CD4-positive, alpha-beta memory T cell (primary cell): ENCODE measurements at regions of chr4 and their contacts with region 1.

Region 1: GRCh38 chr4:37603070-37603468 is 83.1 kb downstream of the RELL1 start:
- DNase-seq: peak; percentile 54 to 69 (median 58)
- H3K4me3 ChIP-seq: no peak overlapping the region
- H3K4me3 Mint-ChIP-seq: peak overlapping the region in 1 of 8 donors; percentile 23
- H3K27ac ChIP-seq: no peak overlapping the region
- H3K27ac Mint-ChIP-seq: peak overlapping the region in 3 of 7 donors; percentile 63 to 77 (median 73)
- H3K4me1 ChIP-seq: peaks cover 4% of the 10 kb centered on the region
- H3K4me1 Mint-ChIP-seq: peaks cover 4 to 11% (median 6%) of the 10 kb centered on the region in 4 donors
- H3K27me3 ChIP-seq: no peaks in the 10 kb centered on the region
- H3K27me3 Mint-ChIP-seq: no peaks in the 10 kb centered on the region

Region 2: GRCh38 chr4:37590016-37590415 is 13.1 kb before region 1 on chr4:
- CTCF ChIA-PET with region 1: interaction called, 12 read pairs
- POLR2A ChIA-PET with region 1: interaction called, 3 read pairs
- intact Hi-C with region 1: no loop called
- DNase-seq: no peak
- H3K4me3 ChIP-seq: no peak overlapping the region
- H3K4me3 Mint-ChIP-seq: no peak overlapping the region
- H3K27ac ChIP-seq: no peak overlapping the region
- H3K27ac Mint-ChIP-seq: no peak overlapping the region
- H3K4me1 ChIP-seq: no peaks in the 10 kb centered on the region
- H3K4me1 Mint-ChIP-seq: no peaks in the 10 kb centered on the region
- H3K27me3 ChIP-seq: no peaks in the 10 kb centered on the region
- H3K27me3 Mint-ChIP-seq: peaks cover 0 to 2% of the 10 kb centered on the region in 2 donors

Region 3: DNA sequence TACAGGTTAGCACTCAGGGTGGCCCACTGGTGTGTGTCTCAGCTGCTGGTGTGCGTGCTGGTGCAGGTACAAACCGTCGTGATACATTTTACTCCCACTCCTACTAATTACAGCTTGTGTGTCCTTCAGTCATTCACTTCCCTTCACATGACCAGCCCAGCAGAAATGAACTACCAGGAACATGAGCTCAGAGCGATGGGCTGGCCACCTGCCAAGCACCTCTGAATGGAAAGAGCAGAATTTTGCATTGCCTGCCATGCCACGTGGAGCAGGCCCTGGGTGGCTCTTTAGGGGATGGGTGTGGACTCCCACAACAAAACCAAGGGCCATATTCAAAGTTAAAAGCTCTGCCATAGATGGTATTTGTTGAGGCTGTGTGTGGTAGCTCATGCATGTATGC is 164.5 kb after region 1 on chr4:
- CTCF ChIA-PET with region 1: interaction called, 11 read pairs
- POLR2A ChIA-PET with region 1: no interaction called
- intact Hi-C with region 1: no loop called
- DNase-seq: no peak
- H3K4me3 ChIP-seq: no peak overlapping the region
- H3K4me3 Mint-ChIP-seq: no peak overlapping the region
- H3K27ac ChIP-seq: no peak overlapping the region
- H3K27ac Mint-ChIP-seq: no peak overlapping the region
- H3K4me1 ChIP-seq: no peaks in the 10 kb centered on the region
- H3K4me1 Mint-ChIP-seq: peaks cover 0 to 3% (median 0%) of the 10 kb centered on the region in 4 donors
- H3K27me3 ChIP-seq: no peaks in the 10 kb centered on the region
- H3K27me3 Mint-ChIP-seq: no peaks in the 10 kb centered on the region

Region 4: DNA sequence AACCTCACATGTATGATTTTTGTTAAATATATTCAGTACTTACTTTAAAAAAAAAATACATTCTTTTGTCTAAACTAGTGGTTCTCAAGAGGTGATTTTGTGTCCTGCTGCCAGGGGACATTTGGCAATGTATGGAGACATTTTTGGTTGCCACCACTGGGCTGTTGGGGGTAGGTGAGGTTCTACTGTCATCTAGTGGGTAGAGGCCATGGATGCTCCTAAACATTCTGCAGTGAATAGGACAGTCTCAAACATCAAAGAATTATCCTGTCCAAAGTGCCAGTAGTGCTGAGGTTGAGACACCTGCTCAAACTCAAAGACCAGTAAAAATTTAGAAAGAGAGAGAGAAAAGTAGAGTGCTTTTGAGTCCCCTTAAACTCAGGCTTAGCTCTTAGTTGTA is 190.5 kb after region 1 on chr4:
- CTCF ChIA-PET with region 1: interaction called, 43 read pairs
- POLR2A ChIA-PET with region 1: no interaction called
- intact Hi-C with region 1: no loop called
- DNase-seq: peak in 4 of 5 donors; percentile 14 to 27 (median 16)
- H3K4me3 ChIP-seq: no peak overlapping the region
- H3K4me3 Mint-ChIP-seq: no peak overlapping the region
- H3K27ac ChIP-seq: no peak overlapping the region
- H3K27ac Mint-ChIP-seq: no peak overlapping the region
- H3K4me1 ChIP-seq: no peaks in the 10 kb centered on the region
- H3K4me1 Mint-ChIP-seq: no peaks in the 10 kb centered on the region
- H3K27me3 ChIP-seq: no peaks in the 10 kb centered on the region
- H3K27me3 Mint-ChIP-seq: peaks cover under 1 to 12% of the 10 kb centered on the region in 2 donors

Region 5: GRCh38 chr4:37977471-37978247 is 374.6 kb after region 1 on chr4:
- CTCF ChIA-PET with region 1: no interaction called
- POLR2A ChIA-PET with region 1: no interaction called
- intact Hi-C with region 1: loop called (anchors 2 kb)
- DNase-seq: peak; percentile 74 to 78 (median 77)
- H3K4me3 ChIP-seq: peak overlapping the region; percentile 67 to 69
- H3K4me3 Mint-ChIP-seq: peak overlapping the region; percentile 86 to 92 (median 88)
- H3K27ac ChIP-seq: peak overlapping the region; percentile 75
- H3K27ac Mint-ChIP-seq: peak overlapping the region; percentile 84 to 91 (median 88)
- H3K4me1 ChIP-seq: peaks cover 22% of the 10 kb centered on the region
- H3K4me1 Mint-ChIP-seq: peaks cover 16 to 40% (median 24%) of the 10 kb centered on the region in 4 donors
- H3K27me3 ChIP-seq: no peaks in the 10 kb centered on the region
- H3K27me3 Mint-ChIP-seq: no peaks in the 10 kb centered on the region